A549 (cell line): ENCODE measurements at regions of chr6 and their contacts with region 1.

Region 1: DNA sequence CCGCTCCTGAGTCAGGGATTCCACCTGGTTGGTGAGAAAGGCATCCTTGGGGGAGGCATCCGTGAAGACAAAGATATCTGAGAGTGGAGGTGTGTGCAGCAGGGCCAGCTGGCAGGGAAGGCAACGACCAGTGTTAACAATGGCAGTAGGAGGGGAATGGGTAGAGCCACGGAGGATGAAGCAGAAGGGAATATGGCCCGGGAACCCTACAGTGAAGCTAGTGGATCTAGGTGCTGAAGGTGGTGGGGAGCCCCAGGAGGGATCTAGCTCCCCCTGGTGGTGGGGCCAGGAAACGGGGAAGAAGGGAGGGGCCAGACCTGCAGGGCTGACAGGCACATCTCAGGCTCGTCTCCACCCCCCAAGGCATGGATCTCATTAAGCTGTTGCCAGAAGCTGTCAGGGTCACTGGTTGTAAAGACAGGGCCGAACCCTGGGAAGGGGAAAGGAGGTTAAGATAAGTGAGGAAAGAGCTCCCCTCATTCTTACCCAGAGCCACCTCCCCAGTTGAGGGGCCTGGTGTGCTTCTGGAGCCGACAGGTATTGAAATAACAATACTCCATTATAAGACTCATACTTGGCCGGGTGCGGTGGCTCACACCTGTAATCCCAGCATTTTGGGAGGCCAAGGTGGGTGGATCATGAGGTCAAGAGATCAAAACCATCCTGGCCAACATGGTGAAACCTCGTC is 7.3 kb downstream of the VWA7 start:
- DNase-seq: peak; percentile 68 to 81
- ATAC-seq: peak; percentile 82 to 84
- H3K4me3 ChIP-seq: no peak overlapping the region
- H3K27ac ChIP-seq: no peak overlapping the region
- H3K4me1 ChIP-seq: peaks cover under 1% of the 10 kb centered on the region; the same call in 2 of the 3 replicates
- CTCF ChIP-seq: peak; percentile 54
- EP300 ChIP-seq: no peak
- POLR2A ChIP-seq: no peak
- RAD21 ChIP-seq: peak; percentile 51 to 61

Region 2: DNA sequence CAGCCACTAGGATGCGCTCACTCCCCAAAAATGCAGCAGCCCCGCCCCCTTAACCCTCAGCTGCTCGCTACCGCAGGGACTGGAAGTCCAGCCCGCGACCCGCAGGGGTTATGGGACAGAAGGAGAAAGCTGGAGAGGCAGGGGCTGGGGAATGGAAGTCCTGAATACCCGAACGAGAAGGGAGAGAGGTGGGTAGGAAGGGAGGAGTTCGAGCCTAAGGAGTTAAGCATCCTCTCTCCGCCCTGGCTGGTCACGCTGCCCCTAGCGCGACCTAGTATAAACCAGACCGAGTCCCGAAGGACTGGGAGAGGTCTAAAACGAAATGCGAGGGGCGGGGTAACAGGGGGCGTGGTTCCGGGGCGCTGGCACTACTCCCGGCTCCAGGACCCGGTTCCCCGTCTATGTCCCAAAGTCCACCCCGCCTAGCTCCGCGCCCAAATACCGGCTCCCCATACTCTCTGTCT is 40.3 kb before region 1 on chr6:
- CTCF ChIA-PET with region 1: interaction called, 11 read pairs
- POLR2A ChIA-PET with region 1: interaction called, 3 read pairs
- DNase-seq: peak; percentile 80 to 85
- ATAC-seq: peak; percentile 85 to 88
- H3K4me3 ChIP-seq: peak overlapping the region; percentile 58
- H3K27ac ChIP-seq: peak overlapping the region; percentile 76 to 95
- H3K4me1 ChIP-seq: peaks cover 17% of the 10 kb centered on the region
- CTCF ChIP-seq: peak; percentile 68
- EP300 ChIP-seq: no peak
- POLR2A ChIP-seq: peak; percentile 35
- RAD21 ChIP-seq: peak; percentile 77 to 85; a peak in 4 of 5 replicates

Region 3: DNA sequence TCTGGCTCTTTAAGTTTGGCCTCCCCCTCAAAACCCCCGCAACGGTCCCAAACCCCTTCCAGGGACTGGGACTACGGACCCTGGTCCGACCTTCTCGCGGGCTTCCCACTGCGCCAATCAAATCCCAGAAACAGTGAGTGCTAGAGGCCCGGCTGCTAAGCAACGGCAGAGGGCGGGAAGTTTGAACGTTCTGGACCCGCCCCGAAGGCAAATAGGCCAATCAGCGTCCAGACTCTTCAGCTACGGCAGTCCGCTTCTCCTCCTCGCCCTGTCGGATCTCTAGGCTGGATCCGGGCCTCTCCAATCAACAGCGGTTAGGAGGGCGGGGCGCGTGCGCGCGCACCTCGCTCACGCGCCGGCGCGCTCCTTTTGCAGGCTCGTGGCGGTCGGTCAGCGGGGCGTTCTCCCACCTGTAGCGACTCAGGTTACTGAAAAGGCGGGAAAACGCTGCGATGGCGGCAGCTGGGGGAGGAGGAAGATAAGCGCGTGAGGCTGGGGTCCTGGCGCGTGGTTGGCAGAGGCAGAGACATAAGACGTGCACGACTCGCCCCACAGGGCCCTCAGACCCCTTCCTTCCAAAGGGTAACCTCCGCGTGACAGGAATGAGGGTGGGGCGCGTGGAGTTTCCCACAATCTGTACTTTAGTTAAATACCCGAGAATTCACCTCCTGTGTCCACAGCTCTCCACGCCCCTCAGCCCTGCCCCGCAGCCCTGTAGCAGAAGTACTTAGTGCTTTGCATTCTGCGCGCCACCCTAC is 30.0 kb before region 1 on chr6 and contains the start of gene MSH5:
- CTCF ChIA-PET with region 1: interaction called, 12 read pairs
- POLR2A ChIA-PET with region 1: interaction called, 3 read pairs
- DNase-seq: peak; percentile 92 to 99
- ATAC-seq: peak; percentile 84 to 90
- H3K4me3 ChIP-seq: peak within 1 kb of the TSS; percentile 67
- H3K27ac ChIP-seq: peak within 1 kb of the TSS; percentile 94 to 99
- H3K4me1 ChIP-seq: peaks cover 42% of the 10 kb centered on the region
- CTCF ChIP-seq: no peak
- EP300 ChIP-seq: no peak
- POLR2A ChIP-seq: peak; percentile 52
- RAD21 ChIP-seq: no peak
- polyA plus RNA-seq, gene MSH5: 36.5 and 42.6 TPM in 2 replicates

Region 4: DNA sequence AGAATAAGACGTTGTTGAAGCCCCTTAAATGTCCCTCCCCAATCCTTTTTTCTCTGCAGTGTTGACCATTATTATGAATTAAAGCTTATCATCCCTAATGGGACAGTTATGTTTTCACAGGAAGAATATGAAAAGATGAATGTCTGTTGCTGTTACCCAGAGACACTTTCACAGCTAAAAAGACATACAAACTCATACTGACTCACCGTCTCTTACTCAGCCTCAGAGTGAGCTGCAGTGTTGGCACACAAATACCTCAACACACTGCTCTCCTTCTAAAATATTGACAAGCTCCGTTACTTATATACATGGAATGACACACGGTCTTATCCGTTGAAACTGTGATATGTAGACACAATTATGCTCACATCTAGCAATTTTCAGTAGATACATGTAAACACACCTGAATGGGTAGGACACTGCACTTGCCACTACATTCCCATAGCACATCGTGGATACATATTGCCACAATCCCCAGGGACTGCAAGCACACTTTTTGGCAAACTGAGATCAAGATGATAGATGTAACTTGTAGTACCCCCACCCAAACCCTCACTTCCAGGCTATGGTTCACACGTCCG is 17.0 kb before region 1 on chr6:
- CTCF ChIA-PET with region 1: interaction called, 12 read pairs
- POLR2A ChIA-PET with region 1: no interaction called
- DNase-seq: peak in 1 of 2 experiments; percentile 37
- ATAC-seq: peak; percentile 90 to 94
- H3K4me3 ChIP-seq: no peak overlapping the region
- H3K27ac ChIP-seq: peak overlapping the region in 1 of 2 experiments; percentile 53; a peak in 2 of 6 replicates
- H3K4me1 ChIP-seq: peaks cover 13% of the 10 kb centered on the region
- CTCF ChIP-seq: no peak
- EP300 ChIP-seq: no peak
- POLR2A ChIP-seq: no peak
- RAD21 ChIP-seq: no peak

Region 5: GRCh38 chr6:31780507-31781243 is 10.8 kb after region 1 on chr6:
- CTCF ChIA-PET with region 1: interaction called, 11 read pairs
- POLR2A ChIA-PET with region 1: no interaction called
- DNase-seq: no peak
- ATAC-seq: no peak
- H3K4me3 ChIP-seq: no peak overlapping the region
- H3K27ac ChIP-seq: no peak overlapping the region
- H3K4me1 ChIP-seq: peaks cover 23% of the 10 kb centered on the region
- CTCF ChIP-seq: no peak
- EP300 ChIP-seq: no peak
- POLR2A ChIP-seq: no peak
- RAD21 ChIP-seq: no peak